IMR-90 (cell line): ENCODE measurements at regions of chr1 and their contacts with region 1.

Region 1: DNA sequence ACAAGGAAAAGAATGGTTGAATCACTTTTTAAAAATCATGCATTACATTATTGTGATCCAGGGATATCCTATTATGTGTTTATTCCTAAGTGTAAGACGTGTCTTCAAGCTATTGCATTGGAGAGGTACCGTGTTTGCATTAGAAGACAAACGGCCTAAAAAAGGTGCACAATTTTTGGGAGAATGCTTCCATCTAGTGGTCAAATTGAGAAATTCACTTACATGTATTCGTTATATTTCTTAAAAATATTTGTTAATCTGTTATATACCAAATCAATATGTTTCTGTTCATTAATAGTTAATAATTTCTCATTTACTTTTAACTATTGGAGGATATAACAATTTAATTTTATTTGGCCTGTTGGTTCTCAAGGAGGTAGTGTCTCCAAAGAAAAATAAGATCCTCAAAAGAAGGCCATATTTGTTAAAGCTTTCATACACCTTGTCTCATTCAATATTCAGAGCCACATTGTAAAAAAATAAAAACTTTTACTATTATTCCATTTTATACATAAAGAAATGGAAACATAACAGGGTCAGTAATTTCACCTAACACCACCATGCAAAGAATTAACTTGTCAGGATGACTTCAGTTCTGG is 40.5 kb upstream of the KCTD3 start:
- DNase-seq: peak; percentile 69
- ATAC-seq: peak; percentile 63; the same call in 1 of the 2 replicates
- H3K4me3 ChIP-seq: no peak overlapping the region
- H3K27ac ChIP-seq: no peak overlapping the region
- H3K4me1 ChIP-seq: peaks cover 3% of the 10 kb centered on the region
- H3K27me3 ChIP-seq: no peaks in the 10 kb centered on the region
- CTCF ChIP-seq: peak; percentile 70
- POLR2A ChIP-seq: no peak
- RAD21 ChIP-seq: peak; percentile 82

Region 2: GRCh38 chr1:214224611-214225354 is 1301.9 kb before region 1 on chr1:
- CTCF ChIA-PET with region 1: no interaction called
- POLR2A ChIA-PET with region 1: no interaction called
- dilution Hi-C with region 1: no loop called
- in situ Hi-C with region 1: loop called (anchors 25 kb)
- intact Hi-C with region 1: no loop called
- DNase-seq: peak; percentile 41
- ATAC-seq: peak; percentile 82
- H3K4me3 ChIP-seq: peak overlapping the region; percentile 42
- H3K27ac ChIP-seq: no peak overlapping the region
- H3K4me1 ChIP-seq: no peaks in the 10 kb centered on the region
- H3K27me3 ChIP-seq: peaks cover 25% of the 10 kb centered on the region
- CTCF ChIP-seq: no peak
- POLR2A ChIP-seq: no peak
- RAD21 ChIP-seq: no peak

Region 3: DNA sequence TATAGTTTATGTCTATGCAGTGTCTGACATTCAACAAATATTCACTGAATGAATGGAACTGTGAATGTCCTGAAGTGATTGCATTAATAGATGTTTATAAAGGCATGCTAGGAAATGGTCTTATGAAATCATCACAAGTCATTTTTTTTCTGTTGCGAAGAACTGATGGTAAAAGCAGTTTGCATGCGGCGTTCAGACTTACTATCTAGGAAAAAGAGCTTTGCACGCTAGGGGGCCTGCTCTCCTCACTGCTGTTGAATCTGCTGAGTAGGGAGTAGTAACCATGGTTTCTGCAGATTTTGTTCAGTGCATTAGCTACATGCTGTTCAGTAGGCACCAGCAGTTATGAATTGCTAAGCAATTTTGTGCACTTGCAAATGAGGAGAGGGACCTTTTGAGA is 865.8 kb before region 1 on chr1:
- CTCF ChIA-PET with region 1: interaction called, 15 read pairs
- POLR2A ChIA-PET with region 1: no interaction called
- dilution Hi-C with region 1: loop called (anchors 25 kb)
- in situ Hi-C with region 1: loop called (anchors 5 kb)
- intact Hi-C with region 1: no loop called
- DNase-seq: peak; percentile 96
- ATAC-seq: peak; percentile 95
- H3K4me3 ChIP-seq: no peak overlapping the region
- H3K27ac ChIP-seq: no peak overlapping the region
- H3K4me1 ChIP-seq: peaks cover 5% of the 10 kb centered on the region
- H3K27me3 ChIP-seq: no peaks in the 10 kb centered on the region
- CTCF ChIP-seq: peak; percentile 88
- POLR2A ChIP-seq: no peak
- RAD21 ChIP-seq: peak; percentile 92

Region 4: DNA sequence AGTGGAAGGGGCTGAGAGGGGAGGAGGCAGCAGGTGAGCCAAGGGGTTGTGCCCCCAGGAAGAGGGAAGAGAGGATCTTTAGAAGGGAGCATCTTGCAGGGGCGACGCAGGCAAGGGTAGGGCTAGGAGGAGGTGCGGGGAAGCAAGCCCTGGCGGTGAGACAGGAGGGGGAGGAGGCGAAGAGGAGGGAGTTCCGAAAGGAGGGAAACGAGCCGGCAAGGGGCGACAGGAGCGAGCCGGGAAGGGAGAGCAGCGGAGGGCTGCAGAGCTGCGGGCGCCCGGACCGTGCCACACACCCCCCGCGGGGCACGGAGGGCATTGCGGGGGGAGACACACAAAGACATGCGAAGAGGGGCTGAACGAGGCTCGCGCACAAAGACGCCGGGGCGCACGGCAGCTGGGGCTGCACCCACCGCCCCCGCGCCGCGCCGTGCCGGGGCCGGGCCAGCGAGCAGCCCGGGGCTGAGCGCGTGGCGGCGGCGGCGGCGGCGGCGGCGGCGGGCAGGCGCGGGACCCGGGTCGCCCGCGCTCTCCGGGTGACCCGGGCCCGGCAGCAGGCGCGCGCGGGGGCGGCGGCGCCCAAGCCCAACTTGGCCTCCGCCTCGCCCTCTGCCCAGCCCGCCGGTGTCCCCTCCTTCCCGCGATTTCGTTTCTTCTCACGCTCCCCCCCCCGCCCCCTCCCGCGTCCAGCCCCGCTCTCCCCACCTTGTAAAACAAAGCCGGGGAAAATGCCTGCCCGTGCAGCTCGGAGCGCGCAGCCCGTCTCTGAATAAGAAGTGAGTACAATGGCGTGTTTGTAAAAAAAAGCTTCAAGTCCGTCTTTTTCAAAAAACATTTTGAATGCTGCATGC is 443.9 kb before region 1 on chr1 and contains the start of gene KCNK2:
- CTCF ChIA-PET with region 1: no interaction called
- POLR2A ChIA-PET with region 1: no interaction called
- dilution Hi-C with region 1: no loop called
- in situ Hi-C with region 1: no loop called
- intact Hi-C with region 1: loop called (anchors 5 kb)
- DNase-seq: peak; percentile 52
- ATAC-seq: peak; percentile 76
- H3K4me3 ChIP-seq: peak within 1 kb of the TSS; percentile 85
- H3K27ac ChIP-seq: peak within 1 kb of the TSS; percentile 39; the same call in 1 of the 2 replicates
- H3K4me1 ChIP-seq: peaks cover 2% of the 10 kb centered on the region; the same call in 1 of the 2 replicates
- H3K27me3 ChIP-seq: peaks cover 4% of the 10 kb centered on the region; the same call in 1 of the 2 replicates
- CTCF ChIP-seq: no peak
- POLR2A ChIP-seq: no peak
- RAD21 ChIP-seq: no peak
- total RNA-seq, gene KCNK2: 86.9 TPM in 2 replicates

Region 5: GRCh38 chr1:215273838-215274516 is 252.7 kb before region 1 on chr1:
- CTCF ChIA-PET with region 1: no interaction called
- POLR2A ChIA-PET with region 1: no interaction called
- dilution Hi-C with region 1: no loop called
- in situ Hi-C with region 1: no loop called
- intact Hi-C with region 1: loop called (anchors 5 kb)
- DNase-seq: peak; percentile 91
- ATAC-seq: peak; percentile 82
- H3K4me3 ChIP-seq: no peak overlapping the region
- H3K27ac ChIP-seq: peak overlapping the region; percentile 53
- H3K4me1 ChIP-seq: peaks cover 9% of the 10 kb centered on the region
- H3K27me3 ChIP-seq: no peaks in the 10 kb centered on the region
- CTCF ChIP-seq: no peak
- POLR2A ChIP-seq: no peak
- RAD21 ChIP-seq: no peak

Region 6: GRCh38 chr1:215507119-215507518 is 19.5 kb before region 1 on chr1:
- CTCF ChIA-PET with region 1: no interaction called
- POLR2A ChIA-PET with region 1: no interaction called
- dilution Hi-C with region 1: no loop called
- in situ Hi-C with region 1: no loop called
- intact Hi-C with region 1: no loop called
- DNase-seq: peak; percentile 61
- ATAC-seq: no peak
- H3K4me3 ChIP-seq: no peak overlapping the region
- H3K27ac ChIP-seq: no peak overlapping the region
- H3K4me1 ChIP-seq: no peaks in the 10 kb centered on the region; the same call in 1 of the 2 replicates
- H3K27me3 ChIP-seq: no peaks in the 10 kb centered on the region
- CTCF ChIP-seq: no peak
- POLR2A ChIP-seq: no peak
- RAD21 ChIP-seq: no peak

Region 7: GRCh38 chr1:215637041-215637573 is 110.5 kb after region 1 on chr1:
- CTCF ChIA-PET with region 1: no interaction called
- POLR2A ChIA-PET with region 1: no interaction called
- dilution Hi-C with region 1: no loop called
- in situ Hi-C with region 1: no loop called
- intact Hi-C with region 1: no loop called
- DNase-seq: peak; percentile 94
- ATAC-seq: peak; percentile 81
- H3K4me3 ChIP-seq: no peak overlapping the region
- H3K27ac ChIP-seq: peak overlapping the region; percentile 51; the same call in 1 of the 2 replicates
- H3K4me1 ChIP-seq: peaks cover 6% of the 10 kb centered on the region; the same call in 1 of the 2 replicates
- H3K27me3 ChIP-seq: no peaks in the 10 kb centered on the region
- CTCF ChIP-seq: no peak
- POLR2A ChIP-seq: no peak
- RAD21 ChIP-seq: no peak